Activated naive CD4-positive, alpha-beta T cell treated with anti-CD3 and anti-CD28 coated beads for 36 hours (primary cell): ENCODE measurements at regions of chr3 and their contacts with region 1.

Region 1: DNA sequence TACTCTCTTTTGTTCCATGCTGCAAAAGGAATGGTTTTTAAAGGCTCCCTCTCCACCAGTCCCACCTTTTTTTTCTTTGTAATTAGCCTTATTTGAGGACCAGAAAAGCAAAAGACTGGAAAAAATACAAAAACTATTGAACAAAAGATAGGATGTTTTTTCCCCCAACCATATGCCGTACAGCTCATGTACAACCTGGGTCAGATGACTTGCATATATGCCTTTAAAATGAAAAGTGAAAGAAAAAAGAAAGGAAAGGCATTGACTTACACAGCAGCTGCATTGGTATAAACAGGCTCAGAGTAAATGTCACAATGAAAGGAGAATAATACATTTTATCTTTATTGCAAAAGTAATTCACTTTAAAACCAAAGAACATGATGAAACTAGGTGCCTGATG is 69.5 kb upstream of the CMC1 start:
- DNase-seq: no peak
- H3K4me3 Mint-ChIP-seq: peak overlapping the region; percentile 42
- H3K27ac Mint-ChIP-seq: peak overlapping the region; percentile 85
- H3K4me1 Mint-ChIP-seq: peaks cover 11% of the 10 kb centered on the region
- H3K27me3 Mint-ChIP-seq: no peaks in the 10 kb centered on the region

Region 2: GRCh38 chr3:28151608-28152228 is 20.2 kb before region 1 on chr3:
- CTCF ChIA-PET with region 1: no interaction called
- intact Hi-C with region 1: loop called (anchors 1 kb)
- DNase-seq: peak; percentile 13
- H3K4me3 Mint-ChIP-seq: no peak overlapping the region
- H3K27ac Mint-ChIP-seq: no peak overlapping the region
- H3K4me1 Mint-ChIP-seq: peaks cover 9% of the 10 kb centered on the region
- H3K27me3 Mint-ChIP-seq: no peaks in the 10 kb centered on the region

Region 3: DNA sequence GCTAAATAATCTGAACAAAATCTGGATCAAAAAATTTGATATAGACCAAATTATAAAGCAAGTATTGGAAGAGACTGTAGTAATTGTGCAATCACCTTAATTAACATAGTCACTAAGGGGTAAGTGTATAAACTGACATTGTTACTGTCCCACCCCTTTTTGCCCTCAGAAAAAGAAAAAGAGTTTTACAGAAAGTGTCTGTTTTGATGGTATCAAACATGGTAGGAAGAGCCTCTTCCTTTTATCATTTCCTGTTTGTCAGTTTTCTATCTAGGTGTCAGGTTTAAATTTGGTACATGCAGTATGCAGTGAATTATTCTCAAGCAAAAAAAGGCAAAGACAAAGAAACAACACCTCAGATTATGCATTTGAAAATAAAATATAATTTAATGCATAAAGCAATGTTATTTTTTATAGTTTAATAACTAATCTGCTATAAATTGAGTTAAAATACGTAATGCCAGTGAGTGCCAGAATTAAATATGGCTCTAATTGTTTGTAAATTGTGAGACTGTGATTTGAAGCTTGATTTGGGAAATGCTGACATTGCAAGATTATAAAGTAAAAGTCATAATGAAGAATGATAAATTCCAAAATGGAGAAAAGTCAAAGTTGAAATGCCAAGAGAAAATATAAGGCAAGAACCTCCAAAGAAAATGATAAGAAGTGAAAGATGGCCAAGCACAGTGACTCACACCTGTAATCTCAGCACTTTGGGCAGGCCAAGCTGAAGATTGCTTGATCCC is 39.2 kb after region 1 on chr3:
- CTCF ChIA-PET with region 1: no interaction called
- intact Hi-C with region 1: loop called (anchors 2 kb)
- DNase-seq: no peak
- H3K4me3 Mint-ChIP-seq: no peak overlapping the region
- H3K27ac Mint-ChIP-seq: no peak overlapping the region
- H3K4me1 Mint-ChIP-seq: peaks cover 24% of the 10 kb centered on the region
- H3K27me3 Mint-ChIP-seq: no peaks in the 10 kb centered on the region

Region 4: DNA sequence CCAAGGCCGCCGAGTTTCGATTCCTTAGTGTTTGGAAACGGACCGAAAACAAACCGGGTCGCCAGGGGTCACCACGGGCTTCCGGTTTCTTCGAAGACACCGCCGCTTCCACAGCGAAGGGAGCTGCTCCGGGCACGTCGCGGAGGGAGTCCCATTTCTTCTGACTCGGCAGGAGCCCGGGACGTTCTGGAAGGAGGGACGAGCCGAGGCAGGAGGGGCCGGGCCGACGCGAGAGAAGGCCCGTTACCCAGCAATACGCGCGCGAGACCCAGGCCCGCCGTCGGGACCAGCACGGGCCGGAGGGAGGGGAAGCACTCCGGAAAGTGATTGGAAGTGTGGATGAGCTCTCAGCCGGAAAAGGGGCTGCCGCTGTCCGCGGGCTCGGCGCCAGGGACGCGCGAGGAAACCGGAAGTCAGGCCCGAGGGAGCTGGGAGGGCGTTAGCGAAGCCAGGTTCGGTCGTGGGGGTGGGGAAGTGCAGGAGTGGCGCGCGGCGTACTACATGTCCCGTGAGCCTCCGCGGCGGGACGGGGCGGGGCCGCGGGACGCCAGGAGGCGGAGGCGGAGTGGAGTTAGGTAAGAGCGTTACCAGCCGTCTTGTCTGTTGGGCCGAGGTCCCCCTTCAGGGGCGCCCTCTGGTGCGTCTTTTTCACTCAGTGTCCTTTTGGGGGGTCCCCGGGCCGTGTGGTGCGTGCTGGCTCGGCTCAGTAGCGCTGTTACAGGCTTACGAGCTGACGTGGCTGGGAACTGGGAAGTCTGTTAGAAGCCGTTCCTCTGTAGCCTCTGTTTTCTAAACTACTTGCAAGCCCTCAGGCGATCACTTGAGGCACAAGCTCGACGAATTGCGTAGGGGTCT is 176.9 kb after region 1 on chr3 and contains the starts of genes AZI2 and ZCWPW2:
- CTCF ChIA-PET with region 1: no interaction called
- intact Hi-C with region 1: loop called (anchors 2 kb)
- DNase-seq: peak; percentile 93
- H3K4me3 Mint-ChIP-seq: peak within 1 kb of the TSS; percentile 88
- H3K27ac Mint-ChIP-seq: peak within 1 kb of the TSS; percentile 92
- H3K4me1 Mint-ChIP-seq: peaks cover 36% of the 10 kb centered on the region
- H3K27me3 Mint-ChIP-seq: no peaks in the 10 kb centered on the region
- total RNA-seq, gene AZI2: 31.5 to 39.4 TPM
- total RNA-seq, gene ZCWPW2: 0.17 TPM in 1 of 2 experiments, not detected in the other